Right cardiac atrium (tissue), 5 donors: ENCODE measurements at regions of chr10 and their contacts with region 1.

Region 1: DNA sequence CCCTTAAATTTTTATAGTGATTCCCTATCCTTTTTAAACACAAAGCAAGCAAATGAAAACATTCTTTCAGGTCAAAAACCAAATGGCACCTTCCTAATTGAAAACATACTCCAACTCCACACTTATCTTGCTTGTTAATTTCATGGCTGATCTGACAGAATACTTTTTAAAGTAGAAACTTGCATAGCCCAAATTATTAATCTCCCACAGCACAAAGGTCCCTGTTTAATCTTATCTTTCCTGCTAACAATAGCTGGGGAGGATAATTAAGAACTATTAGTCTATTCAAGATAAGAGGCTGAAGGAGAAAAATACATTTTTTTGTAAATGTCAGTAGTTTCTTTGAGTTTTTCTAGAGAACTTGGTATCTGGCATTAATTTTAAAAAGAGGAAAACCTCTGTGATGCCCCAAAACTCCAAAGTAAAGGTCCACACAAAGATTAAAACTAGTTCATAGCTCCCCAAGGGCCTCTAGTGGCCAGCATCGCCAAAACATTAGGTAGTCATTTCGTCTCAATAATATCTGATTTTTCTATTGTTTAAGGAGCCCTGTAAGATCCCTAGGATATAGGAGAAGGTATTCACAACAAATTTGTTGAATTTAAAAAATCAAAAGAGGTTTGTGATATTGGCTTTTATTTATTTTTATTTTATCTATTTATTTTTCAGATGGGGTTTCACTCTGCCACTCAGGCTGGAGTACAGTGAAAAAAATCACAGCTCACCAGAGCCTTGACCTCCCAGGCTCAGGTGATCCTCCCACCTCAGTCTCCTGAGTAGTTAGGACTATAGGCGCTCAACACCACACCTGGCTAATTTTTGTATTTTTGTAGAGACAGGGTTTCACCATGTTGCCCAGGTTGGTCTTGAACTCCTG is 14.7 kb downstream of the CDNF start:
- DNase-seq: peak in 2 of 3 donors; percentile 53 to 56
- ATAC-seq: peak in 1 of 2 donors; percentile 40
- H3K4me3 ChIP-seq: no peak overlapping the region
- H3K27ac ChIP-seq: no peak overlapping the region
- H3K4me1 ChIP-seq: no peaks in the 10 kb centered on the region
- H3K27me3 ChIP-seq: no peaks in the 10 kb centered on the region

Region 2: DNA sequence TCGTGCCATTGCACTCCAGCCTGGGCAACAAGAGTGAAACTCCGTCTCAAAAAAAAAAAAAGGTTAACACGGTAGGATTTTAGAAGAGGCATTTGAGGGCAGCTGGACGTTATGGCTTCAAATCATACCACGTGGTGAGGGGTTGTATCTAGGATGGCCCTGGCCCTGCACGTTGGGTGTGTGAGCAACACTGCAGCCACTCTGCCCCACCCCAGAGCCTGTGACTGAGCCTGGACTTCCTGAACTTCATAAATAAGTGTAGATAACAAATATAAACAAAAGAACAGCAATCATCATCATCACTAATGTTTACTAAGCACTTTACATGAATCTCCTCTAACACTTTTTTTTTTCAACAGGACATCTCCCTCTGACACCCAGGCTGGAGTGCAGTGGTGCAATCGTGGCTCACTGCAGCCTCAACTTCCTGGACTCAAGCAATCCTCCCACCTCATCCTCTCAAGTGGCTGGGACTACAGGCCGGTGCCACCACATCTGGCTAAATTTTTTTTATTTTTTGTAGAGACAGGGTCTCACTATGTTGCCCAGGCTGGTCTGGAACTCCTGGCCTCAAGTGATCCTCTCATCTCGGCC is 322.8 kb before region 1 on chr10:
- intact Hi-C with region 1: loop called in 1 of 4 experiments (anchors 5 kb)
- DNase-seq: no peak
- ATAC-seq: peak in 1 of 2 donors; percentile 46
- H3K4me3 ChIP-seq: no peak overlapping the region
- H3K27ac ChIP-seq: no peak overlapping the region
- H3K4me1 ChIP-seq: no peaks in the 10 kb centered on the region
- H3K27me3 ChIP-seq: no peaks in the 10 kb centered on the region

Region 3: DNA sequence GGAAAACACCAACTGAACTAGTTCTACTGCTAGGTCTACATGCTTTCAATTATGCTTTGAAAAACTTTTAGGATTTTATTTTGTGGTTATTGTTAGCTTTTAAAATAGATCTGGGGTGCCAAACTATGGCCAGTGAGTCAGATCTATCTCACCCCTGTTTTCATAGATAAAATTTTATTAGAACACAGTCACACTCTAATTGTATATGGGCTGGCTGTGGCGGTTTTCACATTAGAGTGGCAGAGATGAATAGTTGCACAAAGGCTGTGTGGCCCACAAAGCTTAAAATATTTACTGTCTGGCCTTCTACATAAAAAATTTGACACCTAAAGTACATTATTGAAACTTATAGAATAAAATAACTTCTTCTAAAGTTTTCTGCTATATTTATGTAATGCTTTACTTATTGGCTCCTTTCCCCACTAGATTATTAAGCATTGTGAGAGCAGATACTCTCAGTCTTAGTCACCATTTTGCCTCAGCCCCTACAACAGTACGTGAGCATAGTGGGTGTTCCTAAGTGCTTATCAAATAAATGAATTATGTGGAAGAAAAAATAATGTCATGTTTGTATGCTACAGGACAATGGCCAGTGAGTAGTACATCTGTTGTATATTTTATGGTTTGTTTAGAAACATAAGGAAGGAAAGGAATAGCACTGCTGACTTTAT is 50.1 kb after region 1 on chr10:
- intact Hi-C with region 1: no loop called
- DNase-seq: no peak
- ATAC-seq: no peak
- H3K4me3 ChIP-seq: no peak overlapping the region
- H3K27ac ChIP-seq: no peak overlapping the region
- H3K4me1 ChIP-seq: peaks cover 3% of the 10 kb centered on the region
- H3K27me3 ChIP-seq: no peaks in the 10 kb centered on the region